ENCODE measurements at regions of chr1 and their contacts with region 1.

Region 1: GRCh38 chr1:205284343-205285144 is 37.0 kb downstream of the NUAK2 start:
- DNase-seq: peak; percentile 96
- H3K4me3 Mint-ChIP-seq: peak overlapping the region; percentile 62
- H3K27ac Mint-ChIP-seq: peak overlapping the region; percentile 91
- H3K4me1 Mint-ChIP-seq: peaks cover 79% of the 10 kb centered on the region
- H3K27me3 Mint-ChIP-seq: peaks cover 6% of the 10 kb centered on the region

Region 2: DNA sequence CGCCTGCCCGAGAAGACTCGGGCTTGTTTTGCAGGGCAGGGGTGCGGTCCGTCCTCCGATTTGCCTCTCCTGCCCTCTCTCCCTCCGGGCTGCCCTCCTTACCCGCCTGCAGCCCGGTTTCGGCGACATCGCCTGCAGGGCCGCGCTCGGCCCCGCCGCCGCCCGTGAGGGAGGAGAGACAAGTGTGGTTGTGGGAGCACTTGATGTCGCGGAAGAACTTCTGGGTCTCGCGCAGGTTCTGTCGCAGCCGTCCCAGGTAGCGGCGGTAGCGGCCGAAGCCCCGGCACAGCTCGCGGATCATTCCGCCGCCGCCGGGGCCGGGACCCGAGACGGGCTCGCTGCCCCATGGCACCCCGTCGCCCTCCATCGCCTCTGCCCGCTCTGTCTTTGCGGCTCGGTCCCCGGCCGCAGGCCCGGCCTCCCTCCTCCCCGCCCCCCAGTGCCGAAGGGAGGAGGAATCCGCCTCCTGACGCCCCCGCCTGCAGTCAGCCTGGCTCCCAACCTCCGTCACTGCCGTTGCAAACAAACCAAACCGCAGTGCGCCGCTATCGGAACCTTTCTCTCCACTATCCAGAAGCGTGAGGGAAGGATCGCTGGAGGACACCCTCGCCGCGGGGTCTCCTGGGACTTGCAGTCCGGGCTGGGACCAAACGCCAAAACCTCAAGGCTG is 73.2 kb before region 1 on chr1 and contains the start of gene DSTYK:
- intact Hi-C with region 1: loop called (anchors 1 kb)
- DNase-seq: peak; percentile 97
- H3K4me3 Mint-ChIP-seq: peak within 1 kb of the TSS; percentile 95
- H3K27ac Mint-ChIP-seq: peak within 1 kb of the TSS; percentile 96
- H3K4me1 Mint-ChIP-seq: peaks cover 42% of the 10 kb centered on the region
- H3K27me3 Mint-ChIP-seq: no peaks in the 10 kb centered on the region
- total RNA-seq, gene DSTYK: 26.7 and 27.6 TPM in 2 replicates

Region 3: DNA sequence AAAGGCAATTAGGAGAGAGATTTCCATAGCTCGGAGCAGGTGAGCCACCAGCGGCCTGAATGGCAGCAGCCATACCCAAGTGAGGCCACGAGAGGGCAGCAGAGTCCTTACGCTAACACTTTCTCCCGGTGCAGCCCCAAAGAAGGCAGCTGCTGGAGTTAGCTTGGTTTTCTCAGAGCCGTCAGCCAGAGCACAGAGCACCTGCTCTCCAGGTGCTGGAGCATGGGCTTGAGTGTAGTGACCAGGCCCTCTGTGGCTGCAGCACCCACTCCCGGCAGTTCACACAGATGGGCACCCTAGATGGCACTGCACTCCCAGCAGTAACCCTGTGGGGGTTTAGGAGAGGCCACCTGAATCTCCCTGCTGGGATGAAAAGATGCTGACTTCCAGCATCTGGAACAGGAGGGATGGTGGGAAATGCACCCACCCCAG is 11.0 kb before region 1 on chr1:
- intact Hi-C with region 1: loop called (anchors 1 kb)
- DNase-seq: peak; percentile 95
- H3K4me3 Mint-ChIP-seq: no peak overlapping the region
- H3K27ac Mint-ChIP-seq: no peak overlapping the region
- H3K4me1 Mint-ChIP-seq: peaks cover 26% of the 10 kb centered on the region
- H3K27me3 Mint-ChIP-seq: peaks cover 2% of the 10 kb centered on the region

Region 4: GRCh38 chr1:205321164-205321958 is 36.8 kb after region 1 on chr1 and contains the start of gene NUAK2:
- intact Hi-C with region 1: loop called (anchors 1 kb)
- DNase-seq: peak; percentile 95
- H3K4me3 Mint-ChIP-seq: peak within 1 kb of the TSS; percentile 88
- H3K27ac Mint-ChIP-seq: peak within 1 kb of the TSS; percentile 86
- H3K4me1 Mint-ChIP-seq: peaks cover 57% of the 10 kb centered on the region
- H3K27me3 Mint-ChIP-seq: peaks cover 6% of the 10 kb centered on the region
- total RNA-seq, gene NUAK2: 0.80 and 1.0 TPM in 2 replicates

Measured in activated CD4-positive, alpha-beta T cell treated with anti-CD3 and anti-CD28 coated beads, Interleukin-2, amount 10 ng/mL, durations not matched to agents 24 days and 14 days (primary cell).